H1 (cell line): ENCODE measurements at regions of chr19 and their contacts with region 1.

Region 1: GRCh38 chr19:39623653-39624290 is 21.4 kb downstream of the LGALS13 start:
- DNase-seq: peak in 1 of 2 experiments; percentile 51
- H3K4me3 ChIP-seq: no peak overlapping the region
- H3K27ac ChIP-seq: no peak overlapping the region
- H3K4me1 ChIP-seq: peaks cover 0 to 7% (median under 1%) of the 10 kb centered on the region in 4 experiments; a peak in 4 of 7 replicates
- H3K27me3 ChIP-seq: no peaks in the 10 kb centered on the region
- CTCF ChIP-seq: no peak
- EP300 ChIP-seq: no peak
- POLR2A ChIP-seq: no peak
- RAD21 ChIP-seq: no peak

Region 2: DNA sequence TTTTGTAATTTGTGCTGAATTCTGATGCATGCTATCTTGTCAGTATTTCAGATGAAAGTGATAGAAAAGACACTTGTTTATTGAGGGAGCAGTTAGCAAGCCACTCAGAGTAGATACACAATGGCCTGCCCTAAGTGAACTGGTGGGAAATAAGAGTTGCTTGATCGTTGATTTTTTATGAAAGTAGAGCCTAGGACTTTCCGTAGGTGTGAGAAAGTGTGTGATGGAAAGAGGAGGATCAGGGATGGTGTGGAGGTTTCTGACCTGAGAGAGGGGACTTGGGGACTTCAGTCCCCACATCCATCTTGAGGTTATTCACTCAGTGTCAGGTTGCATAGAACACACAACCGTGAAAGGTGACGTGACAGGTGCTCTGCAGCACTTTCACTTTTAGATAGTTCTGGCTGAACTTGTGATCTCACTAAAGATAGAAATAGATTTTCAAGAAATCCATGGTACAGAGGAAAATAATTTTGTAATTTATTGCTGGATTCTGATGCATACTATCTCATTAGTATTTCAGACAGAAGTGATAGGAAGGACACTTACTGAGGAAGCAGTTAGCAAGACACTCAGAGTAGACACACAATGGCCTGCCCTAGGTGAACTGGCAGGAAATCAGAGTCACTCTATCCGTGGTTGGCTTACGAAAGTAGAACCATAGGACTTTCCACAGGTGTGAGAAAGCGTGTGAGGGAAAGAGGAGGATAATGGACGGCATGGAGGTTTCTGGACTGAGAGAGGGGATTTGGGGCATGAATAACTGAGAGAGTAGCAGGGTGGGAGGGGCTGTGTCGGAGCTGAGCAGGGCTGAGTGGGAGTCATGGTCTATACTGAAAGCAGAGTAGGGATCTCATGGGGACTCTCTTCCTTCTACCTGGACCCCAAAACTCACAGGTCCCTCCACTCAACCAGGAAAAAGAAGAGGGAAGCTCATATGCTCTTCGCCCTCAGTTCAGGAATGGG is 65.3 kb before region 1 on chr19:
- CTCF ChIA-PET with region 1: interaction called, 34 read pairs
- POLR2A ChIA-PET with region 1: no interaction called
- DNase-seq: no peak
- H3K4me3 ChIP-seq: no peak overlapping the region
- H3K27ac ChIP-seq: no peak overlapping the region
- H3K4me1 ChIP-seq: no peaks in the 10 kb centered on the region
- H3K27me3 ChIP-seq: no peaks in the 10 kb centered on the region; a peak in 1 of 7 replicates
- CTCF ChIP-seq: no peak
- EP300 ChIP-seq: no peak
- POLR2A ChIP-seq: no peak
- RAD21 ChIP-seq: no peak

Region 3: GRCh38 chr19:39613597-39613996 is 10.2 kb before region 1 on chr19:
- CTCF ChIA-PET with region 1: no interaction called
- POLR2A ChIA-PET with region 1: no interaction called
- DNase-seq: no peak
- H3K4me3 ChIP-seq: no peak overlapping the region
- H3K27ac ChIP-seq: no peak overlapping the region
- H3K4me1 ChIP-seq: no peaks in the 10 kb centered on the region
- H3K27me3 ChIP-seq: no peaks in the 10 kb centered on the region
- CTCF ChIP-seq: no peak
- EP300 ChIP-seq: no peak
- POLR2A ChIP-seq: no peak
- RAD21 ChIP-seq: no peak